ENCODE measurements at regions of chr1 and their contacts with region 1.

Region 1: DNA sequence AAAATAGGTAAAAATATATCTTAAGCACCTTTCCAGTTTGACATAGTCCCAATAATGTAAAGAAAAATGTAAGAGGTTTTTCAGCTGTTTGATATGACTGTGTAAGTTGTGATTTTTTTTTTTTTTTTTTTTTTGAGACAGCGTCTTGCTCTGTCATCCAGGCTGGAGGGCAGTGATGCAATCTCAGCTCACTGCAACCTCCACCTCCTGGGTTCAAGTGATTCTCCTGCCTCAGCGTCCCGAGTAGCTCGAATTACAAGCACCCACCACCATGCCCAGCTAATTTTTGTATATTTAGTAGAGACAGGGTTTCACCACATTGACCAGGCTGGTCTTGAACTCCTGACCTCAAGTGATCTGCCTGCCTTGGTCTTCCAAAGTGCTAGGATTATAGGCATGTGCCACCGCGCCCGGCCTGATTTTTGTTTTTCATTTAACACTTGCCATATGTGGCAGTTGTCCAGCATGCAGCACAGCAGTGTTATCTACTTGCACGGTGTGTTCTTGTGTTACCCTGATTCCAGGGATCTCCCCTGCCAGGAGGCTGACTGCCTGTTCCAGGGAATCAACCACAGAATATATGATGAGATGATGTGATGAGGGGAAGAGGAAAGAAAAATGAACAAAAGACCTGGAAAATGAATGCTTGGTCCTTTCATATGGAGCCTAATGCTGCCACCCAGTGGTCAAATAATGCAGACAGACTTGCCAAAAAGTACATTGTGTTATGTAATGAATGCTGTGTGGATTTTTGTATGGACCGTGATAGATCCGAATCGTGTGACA is 79.0 kb downstream of the RAVER2 start:
- DNase-seq: peak; percentile 26
- H3K4me3 ChIP-seq: no peak overlapping the region
- H3K27ac ChIP-seq: no peak overlapping the region
- H3K4me1 ChIP-seq: peaks cover 13% of the 10 kb centered on the region
- H3K27me3 ChIP-seq: no peaks in the 10 kb centered on the region
- CTCF ChIP-seq: peak; percentile 86

Region 2: DNA sequence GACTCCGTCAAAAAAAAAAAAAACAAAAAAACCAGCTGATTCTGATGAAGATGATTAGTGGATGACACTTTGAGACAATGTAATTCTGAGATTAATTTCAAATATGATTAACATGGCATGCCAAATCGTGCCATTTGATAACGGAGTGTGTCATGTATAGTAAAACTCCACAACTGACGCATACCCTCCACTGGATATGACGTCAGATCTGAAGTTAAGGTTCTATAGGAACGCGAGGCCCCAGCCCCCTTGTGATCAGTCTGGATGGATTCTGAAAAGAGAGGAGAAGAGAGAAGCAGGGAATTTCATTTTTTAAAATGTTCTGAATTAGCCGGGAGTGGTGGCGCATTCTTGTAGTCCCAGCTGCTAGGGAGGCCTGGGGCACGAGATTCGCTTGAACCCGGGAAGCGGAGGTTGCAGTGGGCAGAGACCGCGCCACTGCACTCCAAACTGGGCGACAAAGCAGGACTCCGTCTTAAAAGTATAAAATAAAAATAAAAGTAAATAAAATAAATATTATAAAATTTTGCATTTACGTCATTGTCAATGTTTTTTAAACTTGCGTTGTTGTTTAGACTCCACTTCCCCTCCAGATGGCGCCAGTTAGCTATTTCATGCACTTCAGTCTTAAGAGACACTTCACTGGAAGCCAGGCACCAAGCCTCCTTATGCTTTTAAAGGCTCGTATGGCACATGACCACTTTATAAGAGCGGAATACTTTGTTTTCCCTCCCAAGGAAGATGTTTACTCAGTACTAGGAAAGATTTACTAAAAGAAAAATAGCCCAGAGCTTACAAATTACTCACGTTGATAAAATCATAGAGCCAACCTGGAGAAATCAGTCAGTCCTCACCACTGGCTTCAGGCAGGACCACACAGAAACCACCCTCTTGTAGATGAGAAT is 555.0 kb before region 1 on chr1:
- intact Hi-C with region 1: loop called (anchors 5 kb)
- DNase-seq: peak; percentile 31
- H3K4me3 ChIP-seq: no peak overlapping the region
- H3K27ac ChIP-seq: no peak overlapping the region
- H3K4me1 ChIP-seq: no peaks in the 10 kb centered on the region
- H3K27me3 ChIP-seq: peaks cover 4% of the 10 kb centered on the region
- CTCF ChIP-seq: peak; percentile 83

Region 3: DNA sequence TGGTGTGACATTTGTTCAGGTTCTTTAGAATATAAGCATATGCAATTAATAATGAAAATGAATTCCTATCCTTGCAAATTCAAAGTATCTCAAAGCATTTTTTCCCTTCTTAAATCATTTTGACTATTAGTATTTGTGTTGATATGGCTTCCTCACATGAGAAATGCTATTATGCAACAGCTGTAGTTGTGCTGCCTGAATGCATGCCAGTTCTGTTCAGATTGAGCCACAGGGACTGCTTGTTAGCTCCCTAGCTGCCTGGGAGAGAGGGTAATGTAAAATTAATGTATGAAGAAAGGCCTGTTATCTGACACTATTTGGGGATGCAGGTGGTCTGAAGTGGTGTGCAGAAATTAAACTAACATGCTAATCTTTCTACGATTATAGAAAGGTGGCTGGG is 308.5 kb before region 1 on chr1:
- intact Hi-C with region 1: no loop called
- DNase-seq: peak; percentile 42
- H3K4me3 ChIP-seq: no peak overlapping the region
- H3K27ac ChIP-seq: peak overlapping the region; percentile 79
- H3K4me1 ChIP-seq: peaks cover 86% of the 10 kb centered on the region
- H3K27me3 ChIP-seq: no peaks in the 10 kb centered on the region
- CTCF ChIP-seq: no peak

Region 4: GRCh38 chr1:64686828-64687724 is 136.8 kb before region 1 on chr1:
- intact Hi-C with region 1: loop called (anchors 2 kb)
- DNase-seq: no peak
- H3K4me3 ChIP-seq: no peak overlapping the region
- H3K27ac ChIP-seq: no peak overlapping the region
- H3K4me1 ChIP-seq: peaks cover 24% of the 10 kb centered on the region
- H3K27me3 ChIP-seq: no peaks in the 10 kb centered on the region
- CTCF ChIP-seq: peak; percentile 93

Region 5: DNA sequence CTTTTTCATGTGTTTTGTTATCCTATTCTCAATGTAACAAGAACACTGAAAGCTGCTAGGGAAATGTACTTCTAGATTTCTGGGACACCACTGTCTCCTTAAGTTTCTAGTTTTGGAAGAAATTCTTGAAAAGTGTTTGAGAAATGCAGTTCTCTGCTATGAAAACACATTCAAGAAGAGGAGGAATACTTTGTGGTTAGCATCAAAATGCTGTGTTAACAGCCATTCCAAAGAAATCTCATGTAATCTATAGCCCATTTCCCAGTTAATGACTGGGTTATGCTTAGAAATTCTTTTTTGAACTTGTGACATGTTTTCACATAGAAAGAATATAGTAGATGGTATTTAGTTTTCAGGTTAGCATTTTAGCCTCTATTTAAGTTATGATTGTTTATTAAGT is 73.0 kb before region 1 on chr1:
- intact Hi-C with region 1: loop called (anchors 5 kb)
- DNase-seq: no peak
- H3K4me3 ChIP-seq: no peak overlapping the region
- H3K27ac ChIP-seq: no peak overlapping the region
- H3K4me1 ChIP-seq: peaks cover 74% of the 10 kb centered on the region
- H3K27me3 ChIP-seq: no peaks in the 10 kb centered on the region
- CTCF ChIP-seq: no peak